Mammary epithelial cell (primary cell): ENCODE measurements at regions of chr19 and their contacts with region 1.

Region 1: DNA sequence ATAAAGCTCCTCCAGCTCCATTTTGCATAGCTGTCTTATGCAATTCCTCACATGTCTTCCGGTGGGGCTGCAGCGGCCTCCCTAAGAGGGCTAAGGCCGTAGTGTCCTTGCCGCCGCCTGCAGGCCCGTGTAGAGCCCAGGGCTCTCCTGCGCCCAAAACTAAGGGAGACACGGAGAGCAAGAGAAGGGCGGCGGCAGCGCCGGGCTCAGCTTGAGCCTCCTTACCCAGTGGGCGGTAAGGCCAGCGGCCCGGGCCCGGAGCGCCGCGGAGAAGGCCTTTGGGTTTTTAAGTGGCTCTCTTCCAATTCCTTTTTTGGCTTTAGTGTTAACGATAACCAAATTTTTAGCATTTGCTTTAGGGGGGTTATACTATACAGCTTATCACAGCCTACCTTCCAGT is 30.1 kb downstream of the ZNF677 start:
- DNase-seq: no peak
- H3K4me3 ChIP-seq: no peak overlapping the region
- H3K27ac ChIP-seq: no peak overlapping the region
- H3K4me1 ChIP-seq: no peaks in the 10 kb centered on the region
- H3K27me3 ChIP-seq: no peaks in the 10 kb centered on the region
- CTCF ChIP-seq: no peak

Region 2: GRCh38 chr19:53019684-53020083 is 204.9 kb before region 1 on chr19:
- CTCF ChIA-PET with region 1: no interaction called
- dilution Hi-C with region 1: no loop called
- in situ Hi-C with region 1: no loop called
- intact Hi-C with region 1: no loop called
- DNase-seq: no peak
- H3K4me3 ChIP-seq: no peak overlapping the region
- H3K27ac ChIP-seq: no peak overlapping the region
- H3K4me1 ChIP-seq: no peaks in the 10 kb centered on the region
- H3K27me3 ChIP-seq: no peaks in the 10 kb centered on the region
- CTCF ChIP-seq: peak in 1 of 2 donors; percentile 43

Region 3: GRCh38 chr19:53365134-53365898 is 140.7 kb after region 1 on chr19 and contains the start of gene ZNF525:
- CTCF ChIA-PET with region 1: no interaction called
- dilution Hi-C with region 1: no loop called
- in situ Hi-C with region 1: loop called in 1 of 2 experiments (anchors 25 kb)
- intact Hi-C with region 1: no loop called
- DNase-seq: peak; percentile 89
- H3K4me3 ChIP-seq: peak within 1 kb of the TSS; percentile 75 to 99 (median 79)
- H3K27ac ChIP-seq: peak within 1 kb of the TSS; percentile 88
- H3K4me1 ChIP-seq: peaks cover 4% of the 10 kb centered on the region
- H3K27me3 ChIP-seq: no peaks in the 10 kb centered on the region
- CTCF ChIP-seq: peak in 1 of 2 donors; percentile 11
- total RNA-seq, gene ZNF525: 11.7 to 15.1 TPM